Posterior cingulate gyrus (tissue), 11 donors: ENCODE measurements at regions of chr19 and their contacts with region 1.

Region 1: DNA sequence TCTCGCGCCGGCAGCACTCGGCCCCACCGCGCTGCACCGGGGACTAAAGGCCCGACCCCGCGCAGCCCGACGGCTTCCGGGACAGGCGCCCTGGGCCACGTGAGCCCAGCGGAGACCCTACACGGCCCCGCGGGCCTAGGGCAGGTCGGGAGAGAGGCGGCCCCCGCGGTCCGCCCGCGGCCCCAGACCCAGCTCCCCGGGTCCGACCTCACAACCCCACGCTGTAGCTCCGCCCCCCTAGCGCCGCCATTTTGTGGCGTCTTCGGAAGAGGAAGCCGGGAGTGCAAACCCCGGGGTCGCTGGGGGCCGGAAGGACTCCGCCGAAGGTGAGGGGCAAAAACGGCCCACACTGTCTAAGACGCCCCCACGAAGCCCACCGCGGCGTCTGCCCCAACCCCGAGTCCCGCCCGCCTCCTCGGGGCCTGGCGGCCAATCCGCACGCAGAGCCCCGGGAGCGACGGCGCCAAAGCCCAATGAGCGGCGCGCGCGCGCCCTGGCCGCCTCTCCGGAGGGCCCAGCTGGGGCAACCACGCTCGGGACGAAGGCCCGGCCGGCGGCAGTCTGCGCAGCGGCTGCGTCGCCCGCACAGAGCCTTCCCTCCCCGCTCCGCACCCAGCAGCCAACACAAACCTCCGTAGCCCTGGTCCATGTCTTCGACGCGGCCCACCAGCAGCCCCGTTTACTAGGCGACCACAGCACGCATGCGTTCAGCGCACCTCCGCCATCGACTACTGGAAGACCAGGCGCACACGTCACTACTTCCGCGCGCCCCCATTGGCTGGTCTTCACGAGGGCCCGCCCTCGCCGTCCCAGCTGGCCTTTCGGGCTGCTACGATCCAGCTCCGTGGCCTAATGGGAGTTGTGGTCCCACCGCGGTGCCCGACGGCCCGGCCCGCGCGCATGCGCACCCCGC is at the start of gene AKAP8:
- DNase-seq: peak; percentile 94 to 100 (median 98)

Region 2: DNA sequence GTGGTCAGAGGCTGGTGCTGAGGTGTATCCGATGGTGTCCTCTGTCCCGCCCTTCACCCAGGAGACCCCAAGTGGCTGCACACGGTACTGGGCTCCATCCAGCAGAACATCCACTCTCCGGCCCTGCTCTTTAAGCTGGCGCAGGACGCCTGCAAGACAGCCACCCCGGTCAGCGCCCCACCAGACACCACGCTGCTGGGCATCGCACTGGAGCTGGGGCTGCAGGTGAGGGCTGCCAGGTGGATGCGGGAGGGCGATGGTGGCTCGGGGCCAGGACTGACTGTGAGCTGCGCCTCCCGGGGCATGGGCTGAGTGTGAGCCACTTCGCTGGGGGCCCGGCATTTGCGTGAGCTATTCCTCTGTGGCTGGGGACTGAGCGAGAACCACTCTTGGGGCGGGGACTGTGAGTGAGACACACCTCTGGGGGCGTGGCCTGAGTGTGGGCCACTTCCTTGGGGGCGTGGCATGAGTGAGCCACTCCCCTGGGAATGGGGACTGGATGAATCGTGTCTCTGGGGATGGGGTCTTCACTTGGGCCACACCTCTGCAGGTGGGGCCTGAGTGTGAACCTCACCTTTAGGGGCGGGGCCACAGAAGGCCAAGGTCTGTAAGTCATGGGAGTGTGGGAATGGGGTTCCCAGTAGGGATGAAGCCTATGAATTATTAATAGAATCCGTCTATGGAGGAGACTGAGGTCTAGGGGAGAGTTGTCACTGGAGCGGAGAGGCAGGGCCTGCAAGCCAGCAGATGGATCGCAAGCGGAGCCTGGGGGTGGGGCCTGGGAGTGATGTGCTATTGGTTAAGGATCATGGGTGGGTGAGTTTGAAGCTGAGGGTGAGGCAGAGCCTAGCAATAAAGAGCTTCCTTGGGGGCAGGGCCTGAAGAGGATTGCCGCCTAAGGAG is 1553.6 kb before region 1 on chr19:
- intact Hi-C with region 1: no loop called
- DNase-seq: peak in 1 of 10 donors; percentile 65

Region 3: GRCh38 chr19:15177269-15178116 is 201.8 kb before region 1 on chr19:
- intact Hi-C with region 1: no loop called
- DNase-seq: peak; percentile 66 to 97 (median 78)

Region 4: DNA sequence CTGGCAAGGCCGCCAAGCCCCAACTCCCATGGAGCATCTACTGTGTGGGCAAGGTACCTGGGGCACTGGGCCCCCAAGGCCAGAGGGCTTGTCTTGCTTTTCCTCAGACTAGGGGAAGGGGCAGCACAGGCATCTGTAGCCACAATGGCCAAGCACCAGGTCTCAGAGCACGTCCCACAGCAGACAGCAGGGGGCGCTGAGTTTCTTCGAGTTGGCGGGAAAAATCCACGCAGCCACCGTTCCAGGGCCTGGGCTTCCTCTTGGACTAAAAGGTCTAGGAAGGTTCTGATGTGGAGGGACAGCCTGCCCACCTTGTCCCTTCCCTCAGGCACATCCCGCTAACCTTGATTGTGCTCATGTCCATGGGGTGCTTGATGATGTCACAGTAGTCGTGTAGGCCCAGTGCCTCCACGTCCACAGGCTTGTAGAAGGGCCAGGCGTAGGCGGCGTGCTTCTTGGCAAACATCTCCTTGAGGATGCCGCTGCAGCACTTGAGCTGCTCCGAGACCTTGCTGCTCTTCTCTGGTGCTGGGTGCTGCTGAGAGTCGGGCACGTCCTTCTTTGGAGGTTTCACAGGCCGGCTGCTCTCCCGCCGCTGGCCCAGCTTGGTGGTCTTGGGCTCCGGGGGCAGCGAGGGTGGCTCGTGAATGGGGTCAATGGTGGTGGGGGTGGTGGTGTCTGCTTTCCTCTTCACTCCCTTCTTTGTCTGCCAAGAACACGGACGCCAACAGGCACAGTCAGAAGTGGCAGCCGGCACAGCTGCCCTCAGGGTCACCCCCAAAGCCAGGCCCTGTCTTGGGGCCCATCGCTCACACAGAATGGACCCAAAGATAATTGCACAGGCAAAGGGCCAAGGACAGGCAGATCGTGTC is 115.0 kb before region 1 on chr19:
- intact Hi-C with region 1: loop called (anchors 5 kb)
- DNase-seq: peak; percentile 53 to 96 (median 78)

Region 5: GRCh38 chr19:15304140-15304705 is 75.1 kb before region 1 on chr19:
- intact Hi-C with region 1: no loop called
- DNase-seq: peak in 2 of 10 donors; percentile 28 to 74

Region 6: GRCh38 chr19:15332311-15332996 is 46.9 kb before region 1 on chr19 and contains the start of gene BRD4:
- intact Hi-C with region 1: loop called (anchors 5 kb)
- DNase-seq: peak; percentile 50 to 95 (median 68)

Region 7: GRCh38 chr19:15418588-15419412 is 39.5 kb after region 1 on chr19 and contains the start of gene AKAP8L:
- intact Hi-C with region 1: loop called (anchors 5 kb)
- DNase-seq: peak; percentile 91 to 100 (median 96)

Region 8: GRCh38 chr19:15432629-15433518 is 53.5 kb after region 1 on chr19:
- intact Hi-C with region 1: loop called (anchors 5 kb)
- DNase-seq: peak; percentile 88 to 99 (median 93)

Region 9: GRCh38 chr19:15555759-15556633 is 176.7 kb after region 1 on chr19:
- intact Hi-C with region 1: loop called (anchors 5 kb)
- DNase-seq: peak; percentile 47 to 95 (median 76)